ENCODE measurements at regions of chr14 and their contacts with region 1.

Region 1: DNA sequence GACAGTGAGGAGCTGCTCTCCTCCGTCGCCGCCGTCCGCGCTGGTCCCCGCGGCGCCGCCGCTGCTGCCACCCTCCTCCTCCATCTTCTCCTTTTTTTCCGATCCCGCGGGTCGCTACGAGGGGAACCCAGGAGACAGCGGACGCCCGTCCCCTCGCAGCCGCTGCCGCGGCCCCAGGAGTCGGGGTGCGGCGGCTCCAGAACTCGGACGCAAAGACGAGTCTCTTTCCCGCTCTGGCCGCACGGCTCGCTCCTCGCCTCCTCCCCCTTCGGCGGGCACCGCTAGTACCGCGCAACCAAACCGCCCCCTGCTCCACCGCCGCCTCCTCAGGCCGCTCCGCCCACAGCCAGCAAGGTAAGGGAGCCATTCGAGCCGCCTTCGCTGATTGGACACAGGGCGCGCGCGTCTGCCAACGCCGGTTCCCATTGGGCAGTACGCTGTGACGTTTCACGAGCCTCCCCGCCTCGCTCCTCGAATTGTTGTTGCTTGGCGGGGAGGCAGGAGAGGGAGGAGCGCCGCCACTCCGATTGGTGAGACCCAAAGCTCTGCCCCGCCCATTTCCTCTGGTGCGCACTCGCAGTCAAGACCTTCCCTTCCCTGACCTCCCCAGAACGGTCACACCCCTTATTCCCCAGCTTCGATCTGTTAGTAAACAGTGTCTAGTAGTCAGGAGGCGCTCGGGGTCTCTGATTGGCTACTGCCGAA is at the start of gene RPS6KA5:
- DNase-seq: peak; percentile 100
- H3K4me3 Mint-ChIP-seq: no peak within 1 kb of the TSS
- H3K27ac Mint-ChIP-seq: no peak within 1 kb of the TSS
- H3K4me1 Mint-ChIP-seq: peaks cover 10% of the 10 kb centered on the region
- H3K27me3 Mint-ChIP-seq: no peaks in the 10 kb centered on the region
- CTCF ChIP-seq: no peak
- total RNA-seq, gene RPS6KA5: 1.3 and 2.2 TPM in 2 replicates

Region 2: GRCh38 chr14:90903101-90903500 is 157.4 kb before region 1 on chr14:
- CTCF ChIA-PET with region 1: interaction called, 7 read pairs
- POLR2A ChIA-PET with region 1: interaction called, 6 read pairs
- intact Hi-C with region 1: loop called (anchors 2 kb)
- DNase-seq: peak; percentile 71
- H3K4me3 Mint-ChIP-seq: no peak overlapping the region
- H3K27ac Mint-ChIP-seq: no peak overlapping the region
- H3K4me1 Mint-ChIP-seq: no peaks in the 10 kb centered on the region
- H3K27me3 Mint-ChIP-seq: no peaks in the 10 kb centered on the region
- CTCF ChIP-seq: peak; percentile 81

Region 3: DNA sequence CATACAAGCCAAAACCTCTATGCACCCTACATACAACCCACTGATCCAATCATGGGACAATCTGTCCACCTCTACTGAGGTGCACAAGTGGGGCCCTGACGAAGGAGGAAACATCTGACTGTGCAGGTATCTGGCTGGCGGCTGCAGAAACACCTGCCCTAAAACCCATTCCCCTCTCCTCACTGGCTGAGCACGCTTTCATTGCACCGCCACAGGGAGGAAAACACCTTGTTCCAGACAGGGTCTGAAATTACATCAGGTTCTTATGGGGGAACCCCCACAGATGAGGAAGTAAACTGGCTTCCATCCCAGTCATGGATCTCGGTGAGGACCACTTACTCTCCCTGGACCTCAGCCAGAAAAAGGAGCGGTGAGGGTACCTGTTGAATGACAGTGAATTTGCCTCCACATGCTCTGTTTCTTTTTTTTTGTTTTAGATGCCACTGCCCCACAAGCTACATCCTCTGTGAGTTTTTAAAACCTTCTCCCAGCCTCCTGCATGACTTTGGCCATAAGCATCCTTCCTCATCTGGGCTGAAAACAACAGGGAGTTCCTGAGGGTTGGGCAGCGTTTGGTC is 29.5 kb after region 1 on chr14:
- CTCF ChIA-PET with region 1: interaction called, 3 read pairs
- POLR2A ChIA-PET with region 1: interaction called, 23 read pairs
- intact Hi-C with region 1: no loop called
- DNase-seq: no peak
- H3K4me3 Mint-ChIP-seq: no peak overlapping the region
- H3K27ac Mint-ChIP-seq: no peak overlapping the region
- H3K4me1 Mint-ChIP-seq: peaks cover 10% of the 10 kb centered on the region
- H3K27me3 Mint-ChIP-seq: no peaks in the 10 kb centered on the region
- CTCF ChIP-seq: no peak

Region 4: GRCh38 chr14:91138511-91139359 is 78.2 kb after region 1 on chr14:
- CTCF ChIA-PET with region 1: interaction called, 5 read pairs
- POLR2A ChIA-PET with region 1: no interaction called
- intact Hi-C with region 1: loop called (anchors 2 kb)
- DNase-seq: peak; percentile 68
- H3K4me3 Mint-ChIP-seq: no peak overlapping the region
- H3K27ac Mint-ChIP-seq: no peak overlapping the region
- H3K4me1 Mint-ChIP-seq: peaks cover 4% of the 10 kb centered on the region
- H3K27me3 Mint-ChIP-seq: no peaks in the 10 kb centered on the region
- CTCF ChIP-seq: peak; percentile 49

Region 5: GRCh38 chr14:91286530-91286937 is 226.0 kb after region 1 on chr14:
- CTCF ChIA-PET with region 1: no interaction called
- POLR2A ChIA-PET with region 1: no interaction called
- intact Hi-C with region 1: loop called (anchors 2 kb)
- DNase-seq: peak; percentile 83
- H3K4me3 Mint-ChIP-seq: no peak overlapping the region
- H3K27ac Mint-ChIP-seq: no peak overlapping the region
- H3K4me1 Mint-ChIP-seq: peaks cover 23% of the 10 kb centered on the region
- H3K27me3 Mint-ChIP-seq: no peaks in the 10 kb centered on the region
- CTCF ChIP-seq: peak; percentile 76

Measured in MCF 10A (cell line).